Prostate gland (tissue), 2 donors: ENCODE measurements at regions of chr13 and their contacts with region 1.

Region 1: GRCh38 chr13:75870397-75870903 is 234.3 kb downstream of the LMO7 start:
- DNase-seq: no peak
- H3K4me3 ChIP-seq: peak overlapping the region; percentile 20 to 25
- H3K27ac ChIP-seq: no peak overlapping the region
- H3K4me1 ChIP-seq: no peaks in the 10 kb centered on the region
- H3K27me3 ChIP-seq: no peaks in the 10 kb centered on the region
- CTCF ChIP-seq: peak; percentile 48 to 67 (median 60)
- POLR2A ChIP-seq: no peak

Region 2: DNA sequence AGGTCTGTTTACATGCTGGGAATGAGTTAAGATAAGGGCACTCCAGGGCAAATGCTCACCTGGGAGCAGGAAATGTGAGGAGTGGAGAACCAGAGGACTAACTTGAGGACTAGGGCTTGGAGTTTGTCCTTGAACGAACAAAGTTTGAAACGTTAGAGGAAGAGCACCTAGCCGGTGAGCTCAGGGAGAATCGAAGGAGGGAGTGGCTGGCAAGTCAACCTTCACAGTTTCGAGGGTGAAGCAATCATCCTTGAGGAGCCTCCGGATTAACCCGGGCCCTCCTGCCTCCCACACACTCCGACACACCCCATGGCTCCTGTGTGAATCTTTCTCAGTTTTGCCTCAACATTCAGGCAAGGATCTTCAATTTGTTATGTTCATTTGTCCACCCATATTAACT is 175.7 kb before region 1 on chr13:
- intact Hi-C with region 1: loop called (anchors 5 kb)
- DNase-seq: no peak
- H3K4me3 ChIP-seq: no peak overlapping the region
- H3K27ac ChIP-seq: no peak overlapping the region
- H3K4me1 ChIP-seq: no peaks in the 10 kb centered on the region
- H3K27me3 ChIP-seq: no peaks in the 10 kb centered on the region
- CTCF ChIP-seq: no peak
- POLR2A ChIP-seq: no peak

Region 3: DNA sequence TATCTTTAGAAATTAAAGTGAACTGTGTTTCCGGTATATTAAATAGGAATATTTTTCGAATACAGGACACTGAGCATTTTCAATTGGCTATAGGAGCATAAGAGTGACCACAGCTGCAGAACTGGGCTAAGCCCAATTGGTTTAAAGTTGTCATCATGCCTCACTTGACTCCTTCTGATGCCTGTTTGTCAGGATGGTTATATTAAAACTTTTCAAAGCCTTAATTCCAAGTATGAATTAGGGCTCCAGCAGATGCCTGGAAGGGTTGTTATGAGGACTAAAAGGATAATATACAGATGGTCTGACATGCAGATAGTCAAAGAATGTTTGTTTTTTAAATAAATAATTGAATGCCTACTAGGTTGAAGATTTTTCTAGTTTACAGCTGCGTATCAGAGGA is 134.3 kb before region 1 on chr13:
- intact Hi-C with region 1: no loop called
- DNase-seq: no peak
- H3K4me3 ChIP-seq: no peak overlapping the region
- H3K27ac ChIP-seq: no peak overlapping the region
- H3K4me1 ChIP-seq: no peaks in the 10 kb centered on the region
- H3K27me3 ChIP-seq: no peaks in the 10 kb centered on the region
- CTCF ChIP-seq: no peak
- POLR2A ChIP-seq: no peak

Region 4: DNA sequence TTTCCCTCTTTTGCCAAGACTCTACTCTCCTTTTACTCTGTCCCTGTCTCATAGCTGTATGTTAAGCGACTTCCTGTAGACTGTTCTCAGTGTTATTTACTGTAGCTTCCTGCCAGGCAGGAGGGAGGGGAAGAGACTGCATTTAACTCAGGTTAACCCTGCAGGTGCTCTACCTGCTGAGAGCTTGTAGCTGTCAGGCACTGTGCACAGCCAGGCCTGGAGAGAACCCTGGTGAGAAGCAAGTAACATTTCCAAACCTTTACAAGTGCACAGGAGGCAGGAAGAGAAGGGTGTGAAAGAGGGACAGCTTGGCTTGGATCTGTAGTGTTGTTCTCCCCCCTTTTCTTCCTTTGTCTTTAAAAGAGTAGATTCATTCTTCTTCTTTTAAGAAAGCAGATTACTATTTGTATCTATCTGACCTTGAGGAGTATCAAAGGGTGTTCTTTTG is 67.3 kb before region 1 on chr13:
- intact Hi-C with region 1: no loop called
- DNase-seq: peak; percentile 78
- H3K4me3 ChIP-seq: no peak overlapping the region
- H3K27ac ChIP-seq: peak overlapping the region; percentile 68 to 72
- H3K4me1 ChIP-seq: no peaks in the 10 kb centered on the region
- H3K27me3 ChIP-seq: no peaks in the 10 kb centered on the region
- CTCF ChIP-seq: peak in 1 of 4 experiments; percentile 7
- POLR2A ChIP-seq: no peak

Region 5: GRCh38 chr13:76473552-76474134 is 603.2 kb after region 1 on chr13:
- intact Hi-C with region 1: loop called (anchors 2 kb)
- DNase-seq: peak; percentile 58
- H3K4me3 ChIP-seq: no peak overlapping the region
- H3K27ac ChIP-seq: no peak overlapping the region
- H3K4me1 ChIP-seq: no peaks in the 10 kb centered on the region
- H3K27me3 ChIP-seq: no peaks in the 10 kb centered on the region
- CTCF ChIP-seq: peak; percentile 54 to 82 (median 78)
- POLR2A ChIP-seq: no peak

Region 6: GRCh38 chr13:76903544-76904162 is 1033.2 kb after region 1 on chr13:
- intact Hi-C with region 1: loop called (anchors 2 kb)
- DNase-seq: peak; percentile 52
- H3K4me3 ChIP-seq: no peak overlapping the region
- H3K27ac ChIP-seq: no peak overlapping the region
- H3K4me1 ChIP-seq: no peaks in the 10 kb centered on the region
- H3K27me3 ChIP-seq: no peaks in the 10 kb centered on the region
- CTCF ChIP-seq: peak; percentile 78 to 89 (median 88)
- POLR2A ChIP-seq: no peak